Endothelial cell of umbilical vein (primary cell): ENCODE measurements at regions of chr4 and their contacts with region 1.

Region 1: GRCh38 chr4:165131247-165131832 is 18.7 kb upstream of the TMEM192 start:
- DNase-seq: peak; percentile 73
- H3K4me3 ChIP-seq: no peak overlapping the region
- H3K27ac ChIP-seq: no peak overlapping the region
- H3K4me1 ChIP-seq: no peaks in the 10 kb centered on the region
- H3K27me3 ChIP-seq: peaks cover 5 to 12% of the 10 kb centered on the region in 2 experiments
- CTCF ChIP-seq: peak; percentile 81 to 84
- POLR2A ChIP-seq: no peak

Region 2: GRCh38 chr4:165112368-165113139 is 18.8 kb before region 1 on chr4 and contains the start of gene TMEM192:
- CTCF ChIA-PET with region 1: interaction called, 47 read pairs
- POLR2A ChIA-PET with region 1: no interaction called
- dilution Hi-C with region 1: no loop called
- intact Hi-C with region 1: no loop called
- DNase-seq: peak; percentile 97
- H3K4me3 ChIP-seq: peak within 1 kb of the TSS; percentile 85 to 95 (median 87)
- H3K27ac ChIP-seq: peak within 1 kb of the TSS; percentile 60
- H3K4me1 ChIP-seq: peaks cover 8% of the 10 kb centered on the region
- H3K27me3 ChIP-seq: no peaks in the 10 kb centered on the region
- CTCF ChIP-seq: peak; percentile 33 to 58
- POLR2A ChIP-seq: peak; percentile 57
- total RNA-seq, gene TMEM192: 13.0 and 14.5 TPM in 2 replicates

Region 3: GRCh38 chr4:165207431-165208220 is 76.3 kb after region 1 on chr4 and contains the start of gene KLHL2:
- CTCF ChIA-PET with region 1: interaction called, 7 read pairs
- POLR2A ChIA-PET with region 1: no interaction called
- dilution Hi-C with region 1: no loop called
- intact Hi-C with region 1: loop called (anchors 1 kb)
- DNase-seq: peak; percentile 80
- H3K4me3 ChIP-seq: peak within 1 kb of the TSS; percentile 95 to 98 (median 97)
- H3K27ac ChIP-seq: peak within 1 kb of the TSS; percentile 58
- H3K4me1 ChIP-seq: peaks cover 22% of the 10 kb centered on the region
- H3K27me3 ChIP-seq: no peaks in the 10 kb centered on the region
- CTCF ChIP-seq: no peak
- POLR2A ChIP-seq: peak; percentile 73
- total RNA-seq, gene KLHL2: 22.1 and 22.9 TPM in 2 replicates

Region 4: GRCh38 chr4:165355900-165356300 is 224.6 kb after region 1 on chr4:
- CTCF ChIA-PET with region 1: interaction called, 347 read pairs
- POLR2A ChIA-PET with region 1: no interaction called
- dilution Hi-C with region 1: no loop called
- intact Hi-C with region 1: no loop called
- DNase-seq: peak; percentile 50
- H3K4me3 ChIP-seq: no peak overlapping the region
- H3K27ac ChIP-seq: no peak overlapping the region
- H3K4me1 ChIP-seq: no peaks in the 10 kb centered on the region
- H3K27me3 ChIP-seq: peaks cover 0 to 7% of the 10 kb centered on the region in 2 experiments
- CTCF ChIP-seq: peak; percentile 40 to 61
- POLR2A ChIP-seq: no peak

Region 5: DNA sequence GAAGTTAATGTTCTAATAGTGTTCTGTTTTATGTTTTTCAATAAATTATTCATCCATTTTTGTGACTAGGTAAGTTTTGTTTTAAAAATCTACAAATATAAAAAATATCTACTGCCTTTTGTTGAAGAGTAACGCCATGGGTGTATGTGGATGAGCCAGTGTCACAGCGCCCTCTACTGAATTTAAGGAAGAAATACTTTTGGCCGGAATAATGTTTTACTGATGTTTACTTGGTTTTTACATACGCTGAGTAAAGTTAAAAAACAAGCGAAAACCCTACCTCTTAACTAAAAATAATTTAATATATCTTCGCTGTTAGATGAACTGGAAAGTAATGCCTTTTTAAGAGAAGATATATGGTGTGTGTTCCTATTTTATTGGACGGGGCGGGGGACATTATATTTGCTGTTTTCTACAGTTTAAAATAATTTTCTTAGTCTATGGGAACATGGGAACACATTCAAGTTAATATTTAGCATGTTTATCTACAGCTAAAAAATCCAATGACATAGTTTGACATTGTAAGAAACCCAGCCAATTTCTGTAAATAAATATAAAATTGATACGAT is 333.6 kb after region 1 on chr4:
- CTCF ChIA-PET with region 1: interaction called, 72 read pairs
- POLR2A ChIA-PET with region 1: no interaction called
- dilution Hi-C with region 1: no loop called
- intact Hi-C with region 1: loop called (anchors 1 kb)
- DNase-seq: peak; percentile 52
- H3K4me3 ChIP-seq: no peak overlapping the region
- H3K27ac ChIP-seq: no peak overlapping the region
- H3K4me1 ChIP-seq: no peaks in the 10 kb centered on the region
- H3K27me3 ChIP-seq: no peaks in the 10 kb centered on the region
- CTCF ChIP-seq: peak; percentile 54 to 61
- POLR2A ChIP-seq: no peak

Region 6: DNA sequence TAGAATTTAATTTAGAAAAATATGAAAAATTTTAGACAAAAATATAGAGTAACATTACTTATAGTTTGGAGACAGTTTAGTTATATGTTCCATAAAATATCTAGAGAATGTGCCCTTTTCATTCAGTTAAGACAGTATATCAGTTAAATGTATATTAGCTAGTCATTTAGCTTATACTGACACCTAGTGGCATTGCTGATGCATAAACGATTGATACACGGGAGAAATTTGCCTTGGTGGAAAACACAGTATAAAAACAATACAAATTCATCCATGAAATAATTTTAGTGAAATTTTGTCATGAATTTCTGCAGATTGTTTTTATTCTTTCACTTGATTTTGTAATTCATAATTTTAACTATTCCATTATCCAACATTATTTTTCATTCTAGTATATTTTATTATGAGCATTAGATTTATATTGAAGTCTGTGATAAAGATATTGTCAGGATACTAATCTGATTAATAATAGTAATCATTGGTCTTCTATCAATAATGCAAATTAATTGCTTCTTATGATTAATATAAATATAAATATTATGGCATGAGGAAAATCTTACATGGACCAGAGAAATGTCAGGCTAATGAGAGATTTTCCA is 960.7 kb after region 1 on chr4:
- CTCF ChIA-PET with region 1: interaction called, 4 read pairs
- POLR2A ChIA-PET with region 1: no interaction called
- dilution Hi-C with region 1: no loop called
- intact Hi-C with region 1: loop called (anchors 10 kb)
- DNase-seq: peak; percentile 43
- H3K4me3 ChIP-seq: no peak overlapping the region
- H3K27ac ChIP-seq: no peak overlapping the region
- H3K4me1 ChIP-seq: no peaks in the 10 kb centered on the region
- H3K27me3 ChIP-seq: no peaks in the 10 kb centered on the region
- CTCF ChIP-seq: peak; percentile 31 to 47
- POLR2A ChIP-seq: no peak